Pancreas (tissue), 10 donors: ENCODE measurements at regions of chr1 and their contacts with region 1.

Region 1: DNA sequence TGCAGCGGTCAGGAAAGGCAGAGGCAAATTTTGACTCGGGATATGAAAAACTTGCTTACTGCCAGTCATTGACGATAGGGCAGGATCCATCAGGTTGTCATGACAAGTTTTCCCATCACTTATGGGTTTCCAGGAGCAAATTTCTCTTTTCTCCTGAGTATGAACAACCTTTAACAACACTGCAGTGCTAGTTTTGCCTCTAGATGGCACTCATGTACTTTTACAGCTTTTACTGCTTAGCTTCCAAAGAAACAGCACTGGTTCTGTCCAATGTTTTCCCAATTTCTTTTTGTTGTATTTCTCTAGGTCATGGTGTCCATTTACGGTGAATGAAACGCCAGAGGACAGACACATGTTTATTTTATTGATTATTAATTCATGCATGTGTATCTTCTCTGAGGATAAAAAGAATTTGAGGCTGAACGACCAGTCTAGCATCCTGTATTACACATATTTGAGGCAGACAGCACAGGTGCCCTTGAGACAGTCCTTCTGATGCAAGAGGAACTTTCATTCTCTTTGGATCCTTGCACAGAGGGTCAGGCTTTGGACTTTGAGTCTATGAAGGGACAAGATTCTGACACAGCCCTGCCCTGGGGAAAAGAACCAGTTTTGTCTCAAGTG is 112.3 kb upstream of the TRABD2B start:
- DNase-seq: peak in 1 of 6 donors; percentile 25
- ATAC-seq: peak in 3 of 4 donors; percentile 78 to 85 (median 84)
- H3K4me3 ChIP-seq: no peak overlapping the region
- H3K27ac ChIP-seq: no peak overlapping the region
- H3K4me1 ChIP-seq: no peaks in the 10 kb centered on the region
- H3K27me3 ChIP-seq: no peaks in the 10 kb centered on the region
- CTCF ChIP-seq: peak; percentile 41 to 72 (median 70)

Region 2: DNA sequence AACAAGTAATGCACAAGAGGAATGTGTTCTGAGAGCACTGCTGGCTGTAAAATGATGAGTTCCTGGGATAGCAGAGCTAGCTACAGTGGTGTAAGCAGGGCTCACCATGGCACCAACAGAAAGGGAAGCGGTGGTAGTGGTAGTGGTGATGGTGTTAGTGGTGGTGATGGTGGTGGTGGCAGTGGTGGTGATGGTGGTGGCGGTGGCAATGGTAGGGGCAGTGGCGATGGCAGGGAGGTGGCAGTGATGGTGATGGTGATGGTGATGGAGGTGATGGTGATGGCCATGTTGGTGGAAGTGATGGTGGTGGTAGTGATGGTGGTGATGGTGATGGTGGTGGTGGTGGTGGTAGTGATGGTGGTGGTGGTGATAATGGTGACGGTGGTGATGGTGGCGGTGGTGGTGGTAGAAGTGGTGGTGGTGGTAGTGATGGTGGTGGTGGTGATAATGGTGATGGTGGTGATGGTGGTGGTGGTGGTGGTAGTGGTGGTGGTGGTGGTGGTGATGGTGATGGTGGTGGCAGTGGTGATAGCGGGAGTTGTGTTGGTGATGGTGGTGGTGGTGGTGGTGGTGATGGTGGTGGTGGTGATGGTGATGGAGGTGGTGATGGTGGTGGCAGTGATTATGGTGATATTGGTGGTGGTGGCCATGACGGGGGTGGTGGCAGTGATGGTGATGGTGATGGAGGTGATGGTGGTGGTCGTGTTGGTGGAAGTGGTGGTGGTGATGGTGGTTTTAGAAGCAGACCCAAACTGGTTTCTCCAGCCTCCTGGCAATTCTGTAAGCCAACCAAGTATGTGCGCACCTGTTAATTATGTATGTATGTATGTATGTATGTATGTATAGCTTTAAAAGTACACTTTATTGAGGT is 366.4 kb before region 1 on chr1:
- intact Hi-C with region 1: loop called in 1 of 3 experiments (anchors 5 kb)
- DNase-seq: no peak
- ATAC-seq: no peak
- H3K4me3 ChIP-seq: no peak overlapping the region
- H3K27ac ChIP-seq: no peak overlapping the region
- H3K4me1 ChIP-seq: no peaks in the 10 kb centered on the region
- H3K27me3 ChIP-seq: no peaks in the 10 kb centered on the region
- CTCF ChIP-seq: no peak

Region 3: GRCh38 chr1:48202030-48202752 is 92.7 kb after region 1 on chr1:
- intact Hi-C with region 1: loop called in 2 of 3 experiments (anchors 5 to 10 kb)
- DNase-seq: peak in 5 of 6 donors; percentile 45 to 86 (median 66)
- ATAC-seq: peak; percentile 83 to 95 (median 89)
- H3K4me3 ChIP-seq: no peak overlapping the region
- H3K27ac ChIP-seq: no peak overlapping the region
- H3K4me1 ChIP-seq: no peaks in the 10 kb centered on the region
- H3K27me3 ChIP-seq: no peaks in the 10 kb centered on the region
- CTCF ChIP-seq: peak; percentile 49 to 67 (median 59)